ENCODE measurements at regions of chr5 and their contacts with region 1.

Region 1: GRCh38 chr5:1799602-1800471 is at the start of gene MRPL36:
- DNase-seq: peak; percentile 95
- ATAC-seq: peak; percentile 69
- H3K4me3 ChIP-seq: peak within 1 kb of the TSS; percentile 75 to 97 (median 92)
- H3K4me3 Mint-ChIP-seq: peak within 1 kb of the TSS; percentile 98
- H3K27ac ChIP-seq: peak within 1 kb of the TSS; percentile 52 to 90
- H3K27ac Mint-ChIP-seq: peak within 1 kb of the TSS; percentile 99
- H3K4me1 ChIP-seq: peaks cover 17 to 24% of the 10 kb centered on the region in 2 donors
- H3K4me1 Mint-ChIP-seq: peaks cover 59% of the 10 kb centered on the region
- H3K27me3 ChIP-seq: no peaks in the 10 kb centered on the region
- H3K27me3 Mint-ChIP-seq: no peaks in the 10 kb centered on the region
- CTCF ChIP-seq: no peak
- total RNA-seq, gene MRPL36: 22.4 and 25.0 TPM in 2 replicates

Region 2: GRCh38 chr5:892394-893136 is 907.3 kb before region 1 on chr5 and contains the starts of genes BRD9 and TRIP13:
- CTCF ChIA-PET with region 1: no interaction called
- POLR2A ChIA-PET with region 1: no interaction called
- intact Hi-C with region 1: loop called (anchors 5 kb)
- DNase-seq: peak; percentile 88
- ATAC-seq: peak; percentile 93
- H3K4me3 ChIP-seq: peak within 1 kb of the TSS; percentile 55 to 90 (median 85)
- H3K4me3 Mint-ChIP-seq: peak within 1 kb of the TSS; percentile 87
- H3K27ac ChIP-seq: peak within 1 kb of the TSS; percentile 54 to 84
- H3K27ac Mint-ChIP-seq: peak within 1 kb of the TSS; percentile 89
- H3K4me1 ChIP-seq: peaks cover 13 to 19% of the 10 kb centered on the region in 2 donors
- H3K4me1 Mint-ChIP-seq: peaks cover 16% of the 10 kb centered on the region
- H3K27me3 ChIP-seq: no peaks in the 10 kb centered on the region
- H3K27me3 Mint-ChIP-seq: no peaks in the 10 kb centered on the region
- CTCF ChIP-seq: no peak
- total RNA-seq, gene BRD9: 68.6 and 74.9 TPM in 2 replicates
- total RNA-seq, gene TRIP13: 1.1 and 1.7 TPM in 2 replicates

Region 3: GRCh38 chr5:1652596-1653345 is 147.1 kb before region 1 on chr5:
- CTCF ChIA-PET with region 1: no interaction called
- POLR2A ChIA-PET with region 1: no interaction called
- intact Hi-C with region 1: loop called (anchors 2 kb)
- DNase-seq: no peak
- ATAC-seq: no peak
- H3K4me3 ChIP-seq: peak overlapping the region in 1 of 5 experiments; percentile 39
- H3K4me3 Mint-ChIP-seq: peak overlapping the region; percentile 84
- H3K27ac ChIP-seq: no peak overlapping the region
- H3K27ac Mint-ChIP-seq: peak overlapping the region; percentile 32
- H3K4me1 ChIP-seq: peaks cover 22 to 23% of the 10 kb centered on the region in 2 donors
- H3K4me1 Mint-ChIP-seq: peaks cover 28% of the 10 kb centered on the region
- H3K27me3 ChIP-seq: peaks cover 0 to 24% (median 8%) of the 10 kb centered on the region in 4 experiments
- H3K27me3 Mint-ChIP-seq: peaks cover 11% of the 10 kb centered on the region
- CTCF ChIP-seq: no peak

Region 4: GRCh38 chr5:3639175-3639574 is 1839.3 kb after region 1 on chr5:
- CTCF ChIA-PET with region 1: no interaction called
- POLR2A ChIA-PET with region 1: no interaction called
- intact Hi-C with region 1: no loop called
- DNase-seq: no peak
- ATAC-seq: no peak
- H3K4me3 ChIP-seq: no peak overlapping the region
- H3K4me3 Mint-ChIP-seq: no peak overlapping the region
- H3K27ac ChIP-seq: no peak overlapping the region
- H3K27ac Mint-ChIP-seq: no peak overlapping the region
- H3K4me1 ChIP-seq: no peaks in the 10 kb centered on the region
- H3K4me1 Mint-ChIP-seq: no peaks in the 10 kb centered on the region
- H3K27me3 ChIP-seq: no peaks in the 10 kb centered on the region
- H3K27me3 Mint-ChIP-seq: no peaks in the 10 kb centered on the region
- CTCF ChIP-seq: no peak